Heart right ventricle (tissue), 16 donors: ENCODE measurements at regions of chr12 and their contacts with region 1.

Region 1: DNA sequence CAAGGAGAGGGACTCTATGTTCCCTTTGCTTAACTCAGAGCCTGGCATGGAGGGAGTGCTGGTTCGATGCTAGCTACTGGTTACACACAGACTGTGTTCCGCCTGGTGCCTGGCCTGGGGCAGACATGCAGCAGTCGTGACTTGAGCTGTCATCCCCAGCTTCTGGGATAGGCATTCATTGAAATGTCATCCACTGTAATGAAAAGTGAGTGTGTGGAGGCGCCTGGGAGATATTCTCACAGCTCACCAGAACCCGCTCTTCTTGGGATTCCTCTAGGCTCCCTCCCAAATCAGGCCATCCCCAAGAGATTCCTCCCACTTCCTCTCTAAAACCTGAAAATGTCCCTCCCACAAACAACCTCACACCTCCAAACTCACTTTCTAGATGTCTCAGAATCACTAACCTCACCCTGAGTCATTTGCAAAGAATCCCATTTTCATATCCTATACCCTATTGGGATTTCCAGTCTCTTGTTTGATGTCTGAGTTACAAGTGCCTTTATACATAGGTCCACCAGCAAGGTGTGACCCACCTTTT is 82.8 kb downstream of the CRACR2A start:
- DNase-seq: no peak
- ATAC-seq: no peak
- H3K4me3 ChIP-seq: no peak overlapping the region
- H3K27ac ChIP-seq: no peak overlapping the region
- H3K4me1 ChIP-seq: peaks cover 0 to 33% (median 16%) of the 10 kb centered on the region in 9 donors
- H3K27me3 ChIP-seq: no peaks in the 10 kb centered on the region
- CTCF ChIP-seq: no peak

Region 2: DNA sequence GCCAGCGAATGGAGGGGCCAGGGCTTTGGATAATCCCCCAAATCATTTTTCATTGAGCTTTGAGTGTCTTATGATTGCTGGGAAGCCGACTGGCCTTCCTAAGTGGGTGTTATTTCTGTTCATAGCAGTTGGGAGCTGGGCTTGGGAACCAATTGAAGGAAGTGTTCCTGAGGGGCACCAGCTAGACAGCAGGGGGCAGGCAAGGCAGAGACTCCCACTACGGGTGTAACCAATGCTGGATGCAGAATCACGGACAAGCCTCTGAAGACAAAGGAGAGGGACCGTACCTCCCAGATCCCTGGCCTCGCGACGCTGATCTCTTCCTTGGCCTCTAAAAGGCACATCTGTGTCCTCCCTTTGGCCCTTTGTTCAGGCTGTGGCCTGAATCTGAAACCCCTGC is 328.1 kb before region 1 on chr12:
- intact Hi-C with region 1: loop called in 1 of 10 experiments (anchors 10 kb)
- DNase-seq: peak; percentile 51 to 79
- ATAC-seq: peak; percentile 84 to 93 (median 90)
- H3K4me3 ChIP-seq: no peak overlapping the region
- H3K27ac ChIP-seq: peak overlapping the region in 8 of 10 donors; percentile 20 to 74 (median 55)
- H3K4me1 ChIP-seq: peaks cover 10 to 25% (median 16%) of the 10 kb centered on the region in 9 donors
- H3K27me3 ChIP-seq: peaks cover 0 to 10% (median 0%) of the 10 kb centered on the region in 7 donors
- CTCF ChIP-seq: peak; percentile 28 to 80 (median 63)

Region 3: DNA sequence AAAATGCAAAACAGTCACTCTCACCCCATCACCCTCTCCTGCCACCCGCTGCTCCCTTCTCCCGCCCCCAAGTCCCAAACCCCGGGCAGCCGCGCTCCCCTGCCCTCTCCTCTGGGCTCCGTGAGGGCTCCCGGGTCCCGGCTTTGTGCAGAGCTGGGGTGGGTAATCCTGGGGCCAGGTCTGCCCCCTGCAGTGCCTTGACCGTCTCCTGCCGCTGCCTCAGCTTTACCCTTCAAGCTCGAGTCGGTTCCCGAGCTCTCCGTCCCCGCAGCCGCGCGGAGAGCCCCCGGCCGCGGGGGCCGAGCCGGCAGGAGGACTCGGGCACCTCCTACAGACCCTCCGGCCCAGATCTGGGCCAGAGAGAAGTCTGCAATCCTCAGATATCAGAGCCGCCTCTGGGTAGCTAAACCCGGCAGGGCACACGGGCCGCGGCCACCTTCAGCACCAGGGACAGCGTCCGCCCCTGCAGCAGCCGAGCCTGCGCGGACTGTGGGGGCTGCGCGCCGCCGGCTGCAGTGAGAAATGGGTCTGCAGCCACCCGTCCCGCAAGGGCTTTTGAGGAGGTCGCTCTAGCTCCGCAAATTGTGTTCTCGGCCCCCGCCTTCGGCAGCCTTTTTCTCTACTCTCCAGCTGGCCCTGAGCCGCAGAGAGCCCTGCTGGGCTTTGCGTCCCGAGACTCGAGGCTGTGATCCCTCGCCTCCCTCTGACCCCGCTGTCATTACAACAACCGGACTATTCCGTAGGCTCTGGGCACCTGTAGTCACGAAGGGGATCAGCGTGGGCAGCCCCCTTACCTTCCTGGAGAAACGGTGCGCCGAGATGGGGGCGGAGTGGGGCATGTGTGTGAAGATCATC is 178.0 kb before region 1 on chr12:
- intact Hi-C with region 1: no loop called
- DNase-seq: peak; percentile 51 to 69
- ATAC-seq: peak in 7 of 8 donors; percentile 81 to 94 (median 90)
- H3K4me3 ChIP-seq: peak overlapping the region in 9 of 10 donors; percentile 24 to 52 (median 42)
- H3K27ac ChIP-seq: no peak overlapping the region
- H3K4me1 ChIP-seq: peaks cover 3 to 36% (median 17%) of the 10 kb centered on the region in 9 donors
- H3K27me3 ChIP-seq: peaks cover 4 to 82% (median 77%) of the 10 kb centered on the region in 7 donors
- CTCF ChIP-seq: no peak

Region 4: DNA sequence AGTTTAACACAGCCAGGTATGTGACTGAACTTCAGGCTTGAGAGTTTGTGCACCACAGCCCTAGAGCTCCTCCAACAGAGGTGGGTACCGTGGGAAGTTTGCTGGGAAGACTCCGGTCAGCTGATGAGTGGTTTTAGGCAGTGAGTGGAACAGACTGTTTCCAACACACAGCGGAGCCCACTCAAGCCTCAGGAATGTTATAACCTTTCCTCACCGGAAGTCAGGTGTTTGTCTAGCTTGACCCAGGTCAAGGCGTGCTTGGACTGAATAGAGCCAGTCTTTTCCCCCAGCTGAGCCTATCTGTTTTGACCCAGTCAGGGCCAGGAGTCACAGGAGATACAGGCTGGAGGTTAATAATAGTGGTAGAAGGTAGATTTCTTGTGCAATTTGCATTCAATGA is 341.4 kb after region 1 on chr12:
- intact Hi-C with region 1: no loop called
- DNase-seq: no peak
- ATAC-seq: no peak
- H3K4me3 ChIP-seq: no peak overlapping the region
- H3K27ac ChIP-seq: no peak overlapping the region
- H3K4me1 ChIP-seq: no peaks in the 10 kb centered on the region
- H3K27me3 ChIP-seq: peaks cover 0 to 7% (median 0%) of the 10 kb centered on the region in 7 donors
- CTCF ChIP-seq: no peak